ENCODE measurements at regions of chr1 and their contacts with region 1.

Region 1: GRCh38 chr1:181088079-181089016 is at the start of gene IER5:
- DNase-seq: peak; percentile 95 to 97 (median 96)
- ATAC-seq: peak; percentile 93 to 94
- H3K4me3 ChIP-seq: peak within 1 kb of the TSS; percentile 70
- H3K27ac ChIP-seq: peak within 1 kb of the TSS; percentile 87
- H3K4me1 ChIP-seq: no peaks in the 10 kb centered on the region
- H3K27me3 ChIP-seq: no peaks in the 10 kb centered on the region
- total RNA-seq, gene IER5: 21.9 to 32.6 (median 28.2) TPM

Region 2: GRCh38 chr1:181033799-181034451 is 54.4 kb before region 1 on chr1 and contains the start of gene MR1:
- intact Hi-C with region 1: loop called in 2 of 4 experiments (anchors 10 kb)
- DNase-seq: no peak
- ATAC-seq: peak; percentile 93 to 94
- H3K4me3 ChIP-seq: peak within 1 kb of the TSS; percentile 64
- H3K27ac ChIP-seq: peak within 1 kb of the TSS; percentile 93
- H3K4me1 ChIP-seq: peaks cover 9% of the 10 kb centered on the region
- H3K27me3 ChIP-seq: no peaks in the 10 kb centered on the region
- total RNA-seq, gene MR1: 9.0 to 16.1 (median 12.2) TPM

Region 3: DNA sequence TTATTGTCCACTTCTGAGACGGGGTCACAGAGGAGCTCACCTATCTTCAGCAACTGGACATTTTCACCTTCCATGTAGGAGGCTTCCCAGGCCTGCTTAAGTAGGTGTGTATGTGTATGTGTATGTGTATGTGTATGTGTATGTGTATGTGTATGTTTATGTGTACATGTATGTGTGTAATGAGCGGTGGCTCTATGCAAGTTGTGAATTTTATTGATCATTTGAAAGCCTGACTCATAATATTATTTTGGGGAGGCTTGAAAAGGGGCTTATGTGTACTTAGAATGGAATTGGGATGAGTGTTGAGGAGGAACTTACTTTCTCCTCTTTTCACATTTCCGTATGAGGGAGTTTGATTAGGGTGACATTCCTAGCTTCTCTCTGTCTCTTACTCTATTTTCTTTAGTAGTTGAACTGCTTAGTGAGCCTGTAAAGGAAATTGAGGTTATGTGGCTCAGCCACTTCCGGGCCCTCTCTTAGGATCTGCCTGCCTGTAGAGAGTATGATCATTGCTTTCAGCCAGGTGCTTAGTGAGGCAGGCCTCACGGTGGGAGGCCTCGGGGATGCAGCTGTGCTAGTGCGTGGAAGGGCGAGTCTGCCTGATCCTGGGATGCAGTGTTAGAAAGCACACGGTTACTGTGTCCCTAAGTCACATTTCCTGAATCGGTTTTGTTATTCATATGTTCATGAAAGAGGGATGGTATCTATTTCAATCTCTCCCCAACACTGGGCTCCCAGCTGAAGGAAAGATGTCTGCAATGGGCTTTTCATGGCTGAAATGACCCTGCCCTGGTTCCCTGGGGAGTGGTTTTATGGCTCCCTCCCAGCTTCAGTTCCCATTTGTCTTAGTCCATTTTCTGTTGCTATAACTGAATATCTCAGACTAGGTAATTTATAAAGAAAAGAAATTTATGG is 61.2 kb after region 1 on chr1:
- intact Hi-C with region 1: loop called in 2 of 4 experiments (anchors 5 kb)
- DNase-seq: no peak
- ATAC-seq: no peak
- H3K4me3 ChIP-seq: no peak overlapping the region
- H3K27ac ChIP-seq: peak overlapping the region; percentile 99
- H3K4me1 ChIP-seq: peaks cover 13% of the 10 kb centered on the region
- H3K27me3 ChIP-seq: no peaks in the 10 kb centered on the region